ENCODE measurements at regions of chr12 and their contacts with region 1.

Region 1: DNA sequence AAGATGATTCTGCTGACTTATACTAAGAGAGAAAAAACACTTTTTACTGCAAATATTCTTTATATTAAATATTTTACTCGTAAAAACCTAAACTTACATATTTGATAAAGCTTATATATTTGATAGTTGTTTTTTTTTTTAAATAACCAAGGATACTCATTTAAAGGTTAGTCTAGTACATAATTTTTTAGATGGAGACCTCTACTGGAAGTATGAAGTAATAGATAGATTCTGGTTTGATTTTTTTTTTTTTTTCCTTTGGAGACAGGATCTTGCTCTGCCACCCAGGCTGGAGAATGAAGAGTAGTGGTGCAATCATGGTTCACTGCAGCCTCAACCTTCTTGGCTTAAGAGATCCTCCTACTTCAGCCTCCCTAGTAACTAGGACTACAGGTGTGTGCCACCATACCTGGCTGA is 16.4 kb downstream of the ARID2 start:
- DNase-seq: no peak

Region 2: GRCh38 chr12:45017916-45018315 is 728.0 kb before region 1 on chr12:
- intact Hi-C with region 1: loop called in 1 of 2 experiments (anchors 5 kb)
- DNase-seq: no peak

Region 3: GRCh38 chr12:45543906-45544315 is 202.0 kb before region 1 on chr12:
- intact Hi-C with region 1: loop called in 1 of 2 experiments (anchors 10 kb)
- DNase-seq: no peak

Region 4: DNA sequence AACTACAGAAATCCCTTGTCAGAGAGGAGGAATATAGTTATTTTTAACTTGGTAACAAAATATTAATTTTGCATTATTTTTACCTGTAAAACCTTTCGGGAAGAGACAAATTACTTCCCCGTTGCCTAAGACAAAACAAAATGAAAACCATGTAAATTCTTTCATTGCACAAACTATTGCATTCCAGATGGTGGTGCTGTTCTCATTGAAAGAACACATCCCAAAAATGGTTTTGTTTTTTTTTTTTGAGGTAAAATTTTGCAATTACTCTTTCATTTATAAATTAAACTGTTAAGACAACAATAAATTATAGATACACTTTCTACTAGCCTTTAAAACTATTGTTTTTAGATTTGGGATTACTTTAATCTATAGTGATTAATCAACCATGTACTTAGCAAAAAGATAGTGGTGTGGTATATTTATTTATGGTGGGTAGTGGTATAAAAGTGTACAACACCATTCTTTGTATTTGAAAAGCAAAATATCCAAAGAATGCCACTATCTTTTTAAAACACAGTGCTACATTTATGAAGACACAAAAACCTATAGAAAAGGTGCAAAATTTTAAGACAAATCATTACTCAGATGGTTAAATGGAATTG is 407.5 kb after region 1 on chr12:
- intact Hi-C with region 1: no loop called
- DNase-seq: no peak